CD8-positive, alpha-beta T cell (primary cell): ENCODE measurements at regions of chr6 and their contacts with region 1.

Region 1: DNA sequence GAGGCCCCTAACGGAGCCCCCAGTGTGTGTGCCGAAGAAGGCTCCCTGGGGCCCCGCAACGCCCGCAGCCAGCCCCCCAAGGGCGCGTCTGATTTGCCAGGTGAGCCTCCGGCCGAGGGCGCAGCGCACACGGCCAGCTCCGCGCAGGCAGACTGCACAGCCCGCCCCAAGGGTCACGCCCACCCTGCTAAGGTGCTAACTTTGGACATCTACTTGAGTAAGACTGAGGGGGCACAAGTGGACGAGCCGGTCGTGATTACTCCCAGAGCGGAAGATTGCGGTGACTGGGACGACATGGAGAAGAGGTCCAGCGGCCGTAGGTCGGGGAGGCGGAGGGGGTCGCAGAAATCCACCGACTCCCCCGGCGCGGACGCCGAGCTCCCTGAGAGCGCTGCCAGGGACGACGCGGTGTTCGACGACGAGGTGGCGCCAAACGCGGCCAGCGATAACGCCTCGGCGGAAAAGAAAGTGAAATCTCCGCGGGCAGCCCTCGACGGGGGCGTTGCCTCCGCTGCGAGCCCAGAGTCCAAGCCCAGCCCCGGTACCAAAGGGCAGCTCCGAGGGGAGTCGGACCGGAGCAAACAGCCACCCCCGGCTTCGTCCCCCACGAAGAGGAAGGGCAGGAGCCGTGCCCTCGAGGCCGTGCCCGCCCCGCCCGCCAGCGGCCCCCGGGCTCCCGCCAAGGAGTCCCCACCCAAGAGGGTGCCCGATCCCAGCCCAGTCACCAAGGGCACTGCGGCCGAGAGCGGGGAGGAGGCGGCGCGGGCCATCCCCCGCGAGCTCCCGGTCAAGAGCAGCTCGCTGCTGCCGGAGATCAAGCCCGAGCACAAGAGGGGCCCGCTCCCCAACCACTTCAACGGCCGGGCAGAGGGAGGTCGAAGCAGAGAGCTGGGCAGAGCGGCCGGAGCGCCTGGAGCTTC is 117.0 kb downstream of the RTN4IP1 start:
- DNase-seq: peak; percentile 55 to 91 (median 80)
- ATAC-seq: peak; percentile 61
- H3K4me3 ChIP-seq: peak overlapping the region; percentile 82 to 84
- H3K4me3 Mint-ChIP-seq: peak overlapping the region; percentile 97
- H3K27ac ChIP-seq: peak overlapping the region; percentile 85
- H3K27ac Mint-ChIP-seq: peak overlapping the region; percentile 96
- H3K4me1 ChIP-seq: peaks cover 58% of the 10 kb centered on the region
- H3K4me1 Mint-ChIP-seq: peaks cover 55% of the 10 kb centered on the region
- H3K27me3 ChIP-seq: no peaks in the 10 kb centered on the region
- H3K27me3 Mint-ChIP-seq: no peaks in the 10 kb centered on the region
- CTCF ChIP-seq: peak; percentile 59

Region 2: GRCh38 chr6:106339334-106340029 is 172.8 kb before region 1 on chr6:
- CTCF ChIA-PET with region 1: no interaction called
- POLR2A ChIA-PET with region 1: no interaction called
- intact Hi-C with region 1: loop called in 1 of 2 experiments (anchors 5 kb)
- DNase-seq: peak in 7 of 9 experiments; percentile 3 to 70 (median 43)
- ATAC-seq: peak; percentile 84
- H3K4me3 ChIP-seq: no peak overlapping the region
- H3K4me3 Mint-ChIP-seq: peak overlapping the region; percentile 33
- H3K27ac ChIP-seq: no peak overlapping the region
- H3K27ac Mint-ChIP-seq: no peak overlapping the region
- H3K4me1 ChIP-seq: no peaks in the 10 kb centered on the region
- H3K4me1 Mint-ChIP-seq: peaks cover 6% of the 10 kb centered on the region
- H3K27me3 ChIP-seq: peaks cover 0 to 2% of the 10 kb centered on the region in 2 experiments
- H3K27me3 Mint-ChIP-seq: peaks cover 23% of the 10 kb centered on the region
- CTCF ChIP-seq: peak; percentile 74

Region 3: DNA sequence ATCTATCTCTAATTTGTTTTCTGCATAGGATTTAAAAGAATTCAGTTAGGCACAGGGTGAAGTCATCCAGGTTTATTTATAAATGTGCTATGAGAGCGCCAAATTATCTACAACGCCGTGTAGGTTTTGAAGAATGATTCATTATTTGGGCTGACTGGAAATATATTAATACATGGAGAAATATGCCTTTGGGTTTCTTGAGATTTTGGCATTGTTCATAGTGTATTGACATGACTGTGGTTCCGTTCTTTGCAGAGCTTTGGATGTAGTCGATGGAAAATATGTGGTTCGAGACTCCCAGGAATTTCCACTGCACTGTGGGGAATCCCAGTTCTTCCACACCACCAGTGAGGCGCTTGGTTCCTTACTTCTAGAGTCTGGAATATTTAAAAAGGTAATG is 60.9 kb before region 1 on chr6:
- CTCF ChIA-PET with region 1: interaction called, 9 read pairs
- POLR2A ChIA-PET with region 1: interaction called, 3 read pairs
- intact Hi-C with region 1: loop called (anchors 1 to 2 kb)
- DNase-seq: no peak
- ATAC-seq: no peak
- H3K4me3 ChIP-seq: no peak overlapping the region
- H3K4me3 Mint-ChIP-seq: no peak overlapping the region
- H3K27ac ChIP-seq: no peak overlapping the region
- H3K27ac Mint-ChIP-seq: no peak overlapping the region
- H3K4me1 ChIP-seq: peaks cover 12% of the 10 kb centered on the region
- H3K4me1 Mint-ChIP-seq: peaks cover 13% of the 10 kb centered on the region
- H3K27me3 ChIP-seq: no peaks in the 10 kb centered on the region
- H3K27me3 Mint-ChIP-seq: no peaks in the 10 kb centered on the region
- CTCF ChIP-seq: no peak

Region 4: GRCh38 chr6:106539936-106540335 is 27.6 kb after region 1 on chr6:
- CTCF ChIA-PET with region 1: interaction called, 32 read pairs
- POLR2A ChIA-PET with region 1: interaction called, 11 read pairs
- intact Hi-C with region 1: no loop called
- DNase-seq: no peak
- ATAC-seq: no peak
- H3K4me3 ChIP-seq: no peak overlapping the region
- H3K4me3 Mint-ChIP-seq: no peak overlapping the region
- H3K27ac ChIP-seq: no peak overlapping the region
- H3K27ac Mint-ChIP-seq: peak overlapping the region; percentile 32
- H3K4me1 ChIP-seq: peaks cover 21% of the 10 kb centered on the region
- H3K4me1 Mint-ChIP-seq: peaks cover 44% of the 10 kb centered on the region
- H3K27me3 ChIP-seq: no peaks in the 10 kb centered on the region
- H3K27me3 Mint-ChIP-seq: no peaks in the 10 kb centered on the region
- CTCF ChIP-seq: no peak

Region 5: GRCh38 chr6:106556368-106556960 is 44.2 kb after region 1 on chr6:
- CTCF ChIA-PET with region 1: interaction called, 115 read pairs
- POLR2A ChIA-PET with region 1: interaction called, 5 read pairs
- intact Hi-C with region 1: loop called (anchors 1 to 2 kb)
- DNase-seq: peak in 2 of 9 experiments; percentile 48 to 63
- ATAC-seq: peak; percentile 70
- H3K4me3 ChIP-seq: no peak overlapping the region
- H3K4me3 Mint-ChIP-seq: no peak overlapping the region
- H3K27ac ChIP-seq: no peak overlapping the region
- H3K27ac Mint-ChIP-seq: no peak overlapping the region
- H3K4me1 ChIP-seq: no peaks in the 10 kb centered on the region
- H3K4me1 Mint-ChIP-seq: no peaks in the 10 kb centered on the region
- H3K27me3 ChIP-seq: no peaks in the 10 kb centered on the region
- H3K27me3 Mint-ChIP-seq: no peaks in the 10 kb centered on the region
- CTCF ChIP-seq: peak; percentile 62

Region 6: GRCh38 chr6:107026965-107027364 is 514.7 kb after region 1 on chr6:
- CTCF ChIA-PET with region 1: no interaction called
- POLR2A ChIA-PET with region 1: no interaction called
- intact Hi-C with region 1: loop called in 1 of 2 experiments (anchors 5 kb)
- DNase-seq: no peak
- ATAC-seq: no peak
- H3K4me3 ChIP-seq: no peak overlapping the region
- H3K4me3 Mint-ChIP-seq: peak overlapping the region; percentile 96
- H3K27ac ChIP-seq: no peak overlapping the region
- H3K27ac Mint-ChIP-seq: peak overlapping the region; percentile 38
- H3K4me1 ChIP-seq: peaks cover 10% of the 10 kb centered on the region
- H3K4me1 Mint-ChIP-seq: peaks cover 28% of the 10 kb centered on the region
- H3K27me3 ChIP-seq: no peaks in the 10 kb centered on the region
- H3K27me3 Mint-ChIP-seq: no peaks in the 10 kb centered on the region
- CTCF ChIP-seq: no peak

Region 7: DNA sequence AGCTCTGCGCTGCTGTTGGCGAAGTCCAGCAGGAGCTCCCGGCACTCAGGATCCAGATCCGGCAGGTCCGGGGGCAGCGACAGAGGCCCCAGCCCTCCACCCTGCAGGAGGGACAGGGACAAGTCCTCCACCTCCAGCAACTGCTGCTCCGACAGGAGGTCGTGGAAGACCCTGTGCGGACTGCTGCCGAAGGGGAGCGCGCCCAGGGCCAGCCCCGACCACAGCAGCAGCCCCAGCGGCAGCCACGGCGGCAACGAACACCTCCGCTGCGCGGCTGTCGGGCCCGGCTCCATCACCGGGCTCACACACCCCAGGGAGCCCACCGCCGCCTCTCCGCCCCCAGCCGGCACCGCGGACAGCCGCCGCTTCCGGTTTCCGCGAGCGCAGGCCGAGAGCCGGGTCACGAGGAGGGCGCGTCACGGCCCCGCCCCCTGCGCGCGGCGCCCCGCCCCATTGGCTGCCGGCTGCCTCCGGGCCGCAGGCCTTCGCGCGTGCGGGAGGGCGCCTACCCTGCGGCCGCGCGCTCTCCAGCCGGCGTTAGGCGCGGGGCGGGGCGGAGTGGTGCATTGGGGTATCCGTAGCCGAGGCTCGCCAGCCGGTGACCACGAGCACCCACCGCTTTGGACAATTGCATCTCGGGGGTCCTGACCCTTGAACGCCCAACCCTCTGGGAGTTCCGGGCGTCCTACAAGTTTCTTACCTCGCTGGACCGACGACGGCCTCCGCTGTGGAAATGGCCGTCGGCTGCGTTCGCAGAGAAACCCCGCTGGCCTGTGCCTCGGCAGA is 1562.2 kb after region 1 on chr6 and contains the start of gene OSTM1:
- CTCF ChIA-PET with region 1: no interaction called
- POLR2A ChIA-PET with region 1: no interaction called
- intact Hi-C with region 1: loop called in 1 of 2 experiments (anchors 10 kb)
- DNase-seq: peak; percentile 89 to 97 (median 94)
- ATAC-seq: peak; percentile 96
- H3K4me3 ChIP-seq: peak within 1 kb of the TSS; percentile 98 to 99
- H3K4me3 Mint-ChIP-seq: peak within 1 kb of the TSS; percentile 89
- H3K27ac ChIP-seq: peak within 1 kb of the TSS; percentile 85 to 88
- H3K27ac Mint-ChIP-seq: peak within 1 kb of the TSS; percentile 88
- H3K4me1 ChIP-seq: peaks cover 19% of the 10 kb centered on the region
- H3K4me1 Mint-ChIP-seq: peaks cover 29% of the 10 kb centered on the region
- H3K27me3 ChIP-seq: no peaks in the 10 kb centered on the region
- H3K27me3 Mint-ChIP-seq: peaks cover 2% of the 10 kb centered on the region
- CTCF ChIP-seq: no peak
- total RNA-seq, gene OSTM1: 20.0 to 25.0 TPM